Left colon (tissue), 2 donors: ENCODE measurements at regions of chr11 and their contacts with region 1.

Region 1: GRCh38 chr11:75142714-75143419 is 8.0 kb upstream of the SLCO2B1 start:
- DNase-seq: peak; percentile 76 to 80
- ATAC-seq: peak; percentile 70

Region 2: DNA sequence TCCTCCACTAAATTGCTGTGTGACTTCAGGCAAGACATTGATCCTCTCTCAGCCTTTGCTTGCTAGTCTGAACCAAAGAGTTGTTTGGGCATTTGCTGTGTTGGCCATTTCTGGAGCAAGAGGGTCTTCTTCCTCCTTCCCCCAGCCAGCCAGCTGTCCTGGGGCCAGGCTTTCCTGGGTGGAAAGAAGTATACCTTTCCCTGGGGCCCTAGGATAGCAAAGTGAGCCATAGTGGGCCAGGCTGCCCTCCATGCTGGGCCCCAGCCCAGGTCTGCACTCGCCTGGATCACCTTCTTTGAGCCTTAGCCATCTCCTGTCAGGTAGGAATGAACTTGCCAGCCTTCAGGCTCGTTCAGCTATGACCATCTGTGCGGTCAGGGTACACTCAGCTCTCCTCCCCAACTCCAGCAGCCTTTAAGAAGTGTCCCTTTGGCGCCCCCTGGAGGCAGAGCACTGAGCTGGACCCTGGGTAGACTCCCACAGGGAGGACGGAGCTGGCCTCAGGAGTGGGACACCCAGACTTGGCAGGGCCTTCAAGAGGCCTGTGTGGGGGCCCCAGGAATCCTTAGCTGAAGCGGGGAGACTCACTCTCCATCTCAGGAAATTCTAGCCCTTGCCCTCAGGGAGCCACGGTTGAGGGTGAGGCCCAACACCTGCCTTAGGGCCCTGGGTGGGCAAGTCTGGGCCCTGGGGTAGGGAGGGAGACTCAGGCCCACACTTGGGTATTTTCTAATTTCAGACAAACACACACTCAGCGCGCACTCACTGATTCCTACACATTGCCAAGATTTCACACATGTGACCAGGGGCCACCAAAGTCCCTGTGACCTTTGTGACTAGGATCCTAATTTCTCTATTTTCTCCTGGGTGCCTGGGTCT is 62.1 kb after region 1 on chr11:
- intact Hi-C with region 1: loop called (anchors 2 to 10 kb)
- DNase-seq: peak; percentile 79 to 96
- ATAC-seq: peak; percentile 93

Region 3: DNA sequence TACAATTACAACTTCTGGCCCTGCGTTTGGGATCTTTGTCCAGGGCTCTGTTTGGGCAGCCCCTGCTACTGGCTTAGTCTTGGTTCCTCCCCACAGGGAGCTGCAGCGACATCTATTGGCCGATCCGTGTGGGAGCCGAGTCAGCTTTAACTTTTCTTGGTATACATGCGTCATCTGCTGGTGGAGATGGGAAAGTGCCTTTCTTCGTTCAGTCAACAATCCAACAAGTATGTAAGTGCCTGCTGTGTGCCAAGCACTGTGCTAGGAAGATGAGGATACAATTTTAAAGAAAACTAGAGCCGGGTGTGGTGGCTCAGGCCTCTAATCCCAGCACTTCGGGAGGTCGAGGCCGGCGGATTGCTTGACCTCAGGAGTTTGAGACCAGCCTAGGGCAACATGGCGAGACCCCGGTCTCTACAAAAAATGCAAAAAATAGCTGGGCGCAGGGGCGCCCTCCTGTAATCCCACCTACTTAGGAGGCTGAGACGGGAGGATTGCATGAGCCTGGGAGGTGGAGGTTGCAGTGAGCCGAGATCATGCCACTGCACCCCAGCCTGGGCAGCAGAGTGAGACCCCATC is 105.9 kb after region 1 on chr11:
- intact Hi-C with region 1: loop called (anchors 5 kb)
- DNase-seq: peak; percentile 84 to 92
- ATAC-seq: peak; percentile 94